ENCODE measurements at regions of chr1 and their contacts with region 1.

Region 1: DNA sequence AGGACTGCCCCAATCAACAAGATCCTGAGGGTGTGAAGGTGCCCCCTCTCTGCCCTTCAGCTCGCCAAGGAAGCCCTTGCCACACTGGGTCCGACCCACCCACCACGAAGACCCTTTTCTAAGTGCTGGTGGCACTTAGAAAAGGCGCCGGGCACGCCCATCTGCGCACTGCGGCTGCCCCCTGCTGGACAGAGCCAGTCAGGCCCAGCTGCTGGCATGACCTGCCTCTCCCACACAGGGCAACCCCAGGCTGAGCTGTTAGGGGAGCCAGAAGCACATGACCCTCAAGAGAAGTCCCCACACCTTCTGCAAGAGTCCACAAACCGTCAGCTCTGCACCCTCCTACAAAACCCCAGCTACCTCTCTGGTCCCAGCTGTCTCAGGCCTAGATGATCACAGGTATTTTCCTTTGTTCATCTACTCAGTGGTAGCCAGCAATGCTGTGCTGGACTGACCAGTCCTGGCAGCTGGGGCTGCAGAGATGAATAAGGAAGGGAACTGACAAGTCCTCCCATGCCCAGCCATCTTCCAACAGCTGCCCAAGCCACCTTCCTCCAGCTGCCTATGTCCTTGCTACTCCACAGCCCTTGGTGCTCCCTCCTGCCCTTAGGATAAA is 40.0 kb upstream of the ZC3H12A start:
- DNase-seq: peak; percentile 75
- ATAC-seq: peak; percentile 90
- H3K4me3 ChIP-seq: no peak overlapping the region
- H3K4me3 Mint-ChIP-seq: no peak overlapping the region
- H3K27ac ChIP-seq: no peak overlapping the region
- H3K27ac Mint-ChIP-seq: no peak overlapping the region
- H3K4me1 ChIP-seq: no peaks in the 10 kb centered on the region
- H3K4me1 Mint-ChIP-seq: no peaks in the 10 kb centered on the region
- H3K27me3 ChIP-seq: peaks cover 0 to 3% (median 0%) of the 10 kb centered on the region in 4 experiments
- H3K27me3 Mint-ChIP-seq: peaks cover 32% of the 10 kb centered on the region
- CTCF ChIP-seq: peak; percentile 93

Region 2: GRCh38 chr1:36516372-36517325 is 917.8 kb before region 1 on chr1:
- CTCF ChIA-PET with region 1: interaction called, 21 read pairs
- POLR2A ChIA-PET with region 1: no interaction called
- intact Hi-C with region 1: no loop called
- DNase-seq: peak; percentile 64
- ATAC-seq: peak; percentile 24
- H3K4me3 ChIP-seq: no peak overlapping the region
- H3K4me3 Mint-ChIP-seq: no peak overlapping the region
- H3K27ac ChIP-seq: no peak overlapping the region
- H3K27ac Mint-ChIP-seq: no peak overlapping the region
- H3K4me1 ChIP-seq: no peaks in the 10 kb centered on the region
- H3K4me1 Mint-ChIP-seq: no peaks in the 10 kb centered on the region
- H3K27me3 ChIP-seq: no peaks in the 10 kb centered on the region
- H3K27me3 Mint-ChIP-seq: no peaks in the 10 kb centered on the region
- CTCF ChIP-seq: peak; percentile 84

Region 3: DNA sequence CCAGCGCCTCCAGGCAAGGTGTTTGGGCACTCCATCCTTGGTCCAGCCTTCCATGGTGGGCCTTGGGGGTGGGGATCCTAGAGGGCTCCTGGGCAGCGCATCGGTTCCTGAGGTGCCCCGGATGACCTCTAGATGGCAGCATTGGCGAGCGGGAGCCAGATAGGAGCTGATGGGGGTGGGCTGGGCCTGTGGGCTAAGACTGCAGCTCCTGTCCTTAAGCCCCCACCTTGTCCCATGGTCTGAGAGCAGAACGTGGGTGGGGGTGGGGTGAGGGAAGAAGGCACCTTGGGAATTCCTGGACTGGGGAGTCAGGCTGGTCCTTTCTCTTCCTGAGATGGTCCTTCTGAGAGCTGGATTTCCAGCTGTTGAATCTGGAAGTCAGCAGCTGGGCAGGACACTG is 858.3 kb before region 1 on chr1:
- CTCF ChIA-PET with region 1: interaction called, 46 read pairs
- POLR2A ChIA-PET with region 1: no interaction called
- intact Hi-C with region 1: no loop called
- DNase-seq: peak; percentile 65
- ATAC-seq: peak; percentile 69
- H3K4me3 ChIP-seq: no peak overlapping the region
- H3K4me3 Mint-ChIP-seq: no peak overlapping the region
- H3K27ac ChIP-seq: no peak overlapping the region
- H3K27ac Mint-ChIP-seq: no peak overlapping the region
- H3K4me1 ChIP-seq: no peaks in the 10 kb centered on the region
- H3K4me1 Mint-ChIP-seq: no peaks in the 10 kb centered on the region
- H3K27me3 ChIP-seq: peaks cover 0 to 21% (median 2%) of the 10 kb centered on the region in 4 experiments
- H3K27me3 Mint-ChIP-seq: peaks cover 24% of the 10 kb centered on the region
- CTCF ChIP-seq: peak; percentile 79

Region 4: DNA sequence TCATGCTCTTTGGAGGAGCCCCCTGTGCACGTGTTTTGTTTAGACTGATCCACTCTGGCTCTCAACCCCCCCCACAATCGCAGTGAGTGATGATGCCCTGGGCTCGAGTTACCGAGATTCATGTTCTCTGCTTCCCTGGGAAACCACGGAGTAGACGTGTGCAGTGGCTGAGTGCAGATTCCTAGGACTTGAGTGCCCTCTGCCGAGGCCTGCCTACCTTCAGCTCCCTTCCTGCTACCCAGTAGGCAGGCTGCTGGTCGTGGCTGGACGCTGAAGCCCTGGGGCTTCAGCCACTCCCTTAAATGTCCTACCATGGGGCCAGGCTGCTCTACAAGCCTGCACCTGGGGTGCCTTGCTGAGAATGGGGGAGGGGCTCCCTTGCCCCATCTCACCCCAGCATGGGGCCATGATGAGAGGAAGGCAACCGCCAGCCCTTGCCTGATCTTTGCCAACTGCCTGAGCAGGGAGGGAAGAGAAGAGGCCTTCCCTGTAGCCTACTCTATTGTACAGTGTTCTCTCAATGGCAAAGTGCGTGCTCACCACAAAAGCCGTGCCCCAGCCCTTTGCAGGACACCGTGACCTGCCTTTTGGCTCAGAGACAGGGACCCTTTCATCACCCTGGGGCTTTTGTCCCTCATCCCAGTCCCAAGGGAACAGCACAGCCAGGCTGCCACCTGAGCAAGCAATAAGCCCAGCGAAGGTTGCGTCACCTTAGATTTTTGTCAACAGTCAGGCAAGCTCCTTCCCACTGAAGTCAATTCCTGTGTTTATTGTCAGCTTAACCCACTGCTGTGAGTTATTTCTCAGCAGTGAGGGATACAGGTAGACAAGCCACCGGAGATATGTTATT is 395.9 kb before region 1 on chr1:
- CTCF ChIA-PET with region 1: interaction called, 4 read pairs
- POLR2A ChIA-PET with region 1: no interaction called
- intact Hi-C with region 1: loop called (anchors 5 kb)
- DNase-seq: no peak
- ATAC-seq: no peak
- H3K4me3 ChIP-seq: no peak overlapping the region
- H3K4me3 Mint-ChIP-seq: no peak overlapping the region
- H3K27ac ChIP-seq: no peak overlapping the region
- H3K27ac Mint-ChIP-seq: no peak overlapping the region
- H3K4me1 ChIP-seq: peaks cover 27 to 28% of the 10 kb centered on the region in 2 donors
- H3K4me1 Mint-ChIP-seq: peaks cover 24% of the 10 kb centered on the region
- H3K27me3 ChIP-seq: peaks cover 0 to 76% (median 33%) of the 10 kb centered on the region in 4 experiments
- H3K27me3 Mint-ChIP-seq: peaks cover 68% of the 10 kb centered on the region
- CTCF ChIP-seq: no peak

Region 5: DNA sequence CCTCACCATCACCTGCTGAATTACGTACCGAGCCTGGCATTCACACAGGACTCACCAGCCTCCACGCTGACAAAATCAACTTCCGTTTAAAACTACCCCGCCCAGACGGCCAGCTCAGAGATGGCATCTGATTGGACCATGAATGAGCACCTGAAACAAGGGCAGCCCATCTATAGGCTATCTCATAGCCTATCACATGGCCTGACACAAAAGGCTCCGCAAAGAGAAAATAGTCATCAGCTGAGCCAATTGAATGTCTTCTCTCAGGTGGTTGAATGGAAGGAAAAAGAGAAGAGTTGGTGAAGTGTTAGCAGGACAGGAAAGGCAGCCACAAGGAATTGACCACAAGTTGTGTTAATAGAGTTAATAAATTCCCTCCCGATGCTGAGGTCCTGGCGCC is 10.6 kb before region 1 on chr1:
- CTCF ChIA-PET with region 1: interaction called, 10 read pairs
- POLR2A ChIA-PET with region 1: no interaction called
- intact Hi-C with region 1: no loop called
- DNase-seq: no peak
- ATAC-seq: no peak
- H3K4me3 ChIP-seq: no peak overlapping the region
- H3K4me3 Mint-ChIP-seq: no peak overlapping the region
- H3K27ac ChIP-seq: no peak overlapping the region
- H3K27ac Mint-ChIP-seq: no peak overlapping the region
- H3K4me1 ChIP-seq: no peaks in the 10 kb centered on the region
- H3K4me1 Mint-ChIP-seq: no peaks in the 10 kb centered on the region
- H3K27me3 ChIP-seq: peaks cover 0 to 4% (median 0%) of the 10 kb centered on the region in 4 experiments
- H3K27me3 Mint-ChIP-seq: peaks cover 40% of the 10 kb centered on the region
- CTCF ChIP-seq: no peak

Region 6: GRCh38 chr1:37479255-37480124 is 45.1 kb after region 1 on chr1:
- CTCF ChIA-PET with region 1: no interaction called
- POLR2A ChIA-PET with region 1: no interaction called
- intact Hi-C with region 1: no loop called
- DNase-seq: peak; percentile 79
- ATAC-seq: peak; percentile 50
- H3K4me3 ChIP-seq: peak overlapping the region; percentile 94 to 99 (median 98)
- H3K4me3 Mint-ChIP-seq: peak overlapping the region; percentile 100
- H3K27ac ChIP-seq: peak overlapping the region; percentile 96 to 97
- H3K27ac Mint-ChIP-seq: peak overlapping the region; percentile 98
- H3K4me1 ChIP-seq: peaks cover 32 to 66% of the 10 kb centered on the region in 2 donors
- H3K4me1 Mint-ChIP-seq: peaks cover 60% of the 10 kb centered on the region
- H3K27me3 ChIP-seq: no peaks in the 10 kb centered on the region
- H3K27me3 Mint-ChIP-seq: no peaks in the 10 kb centered on the region
- CTCF ChIP-seq: no peak